Activated CD4-positive, alpha-beta memory T cell treated with anti-CD3 and anti-CD28 coated beads for 36 hours (primary cell): ENCODE measurements at regions of chr4 and their contacts with region 1.

Region 1: GRCh38 chr4:77025643-77026321 is 50.0 kb downstream of the CCNI start:
- DNase-seq: no peak
- H3K4me3 Mint-ChIP-seq: no peak overlapping the region
- H3K27ac Mint-ChIP-seq: peak overlapping the region; percentile 62
- H3K4me1 Mint-ChIP-seq: peaks cover 43% of the 10 kb centered on the region
- H3K27me3 Mint-ChIP-seq: no peaks in the 10 kb centered on the region

Region 2: GRCh38 chr4:76055016-76055415 is 970.8 kb before region 1 on chr4:
- CTCF ChIA-PET with region 1: no interaction called
- POLR2A ChIA-PET with region 1: no interaction called
- intact Hi-C with region 1: loop called (anchors 5 kb)
- DNase-seq: peak; percentile 56
- H3K4me3 Mint-ChIP-seq: no peak overlapping the region
- H3K27ac Mint-ChIP-seq: peak overlapping the region; percentile 49
- H3K4me1 Mint-ChIP-seq: peaks cover 41% of the 10 kb centered on the region
- H3K27me3 Mint-ChIP-seq: peaks cover 18% of the 10 kb centered on the region

Region 3: GRCh38 chr4:76634239-76634638 is 391.5 kb before region 1 on chr4:
- CTCF ChIA-PET with region 1: no interaction called
- POLR2A ChIA-PET with region 1: no interaction called
- intact Hi-C with region 1: no loop called
- DNase-seq: no peak
- H3K4me3 Mint-ChIP-seq: no peak overlapping the region
- H3K27ac Mint-ChIP-seq: no peak overlapping the region
- H3K4me1 Mint-ChIP-seq: no peaks in the 10 kb centered on the region
- H3K27me3 Mint-ChIP-seq: peaks cover 27% of the 10 kb centered on the region

Region 4: GRCh38 chr4:76758290-76758882 is 267.4 kb before region 1 on chr4:
- CTCF ChIA-PET with region 1: no interaction called
- POLR2A ChIA-PET with region 1: no interaction called
- intact Hi-C with region 1: loop called (anchors 5 kb)
- DNase-seq: no peak
- H3K4me3 Mint-ChIP-seq: no peak overlapping the region
- H3K27ac Mint-ChIP-seq: no peak overlapping the region
- H3K4me1 Mint-ChIP-seq: peaks cover 11% of the 10 kb centered on the region
- H3K27me3 Mint-ChIP-seq: peaks cover 7% of the 10 kb centered on the region

Region 5: GRCh38 chr4:76960014-76960413 is 65.8 kb before region 1 on chr4:
- CTCF ChIA-PET with region 1: no interaction called
- POLR2A ChIA-PET with region 1: interaction called, 3 read pairs
- intact Hi-C with region 1: loop called (anchors 1 kb)
- DNase-seq: no peak
- H3K4me3 Mint-ChIP-seq: no peak overlapping the region
- H3K27ac Mint-ChIP-seq: no peak overlapping the region
- H3K4me1 Mint-ChIP-seq: peaks cover 16% of the 10 kb centered on the region
- H3K27me3 Mint-ChIP-seq: no peaks in the 10 kb centered on the region

Region 6: GRCh38 chr4:77003400-77003799 is 22.4 kb before region 1 on chr4:
- CTCF ChIA-PET with region 1: no interaction called
- POLR2A ChIA-PET with region 1: interaction called, 3 read pairs
- intact Hi-C with region 1: loop called (anchors 1 kb)
- DNase-seq: no peak
- H3K4me3 Mint-ChIP-seq: no peak overlapping the region
- H3K27ac Mint-ChIP-seq: no peak overlapping the region
- H3K4me1 Mint-ChIP-seq: peaks cover 37% of the 10 kb centered on the region
- H3K27me3 Mint-ChIP-seq: no peaks in the 10 kb centered on the region